Heart left ventricle (tissue), 16 donors: ENCODE measurements at regions of chr5 and their contacts with region 1.

Region 1: DNA sequence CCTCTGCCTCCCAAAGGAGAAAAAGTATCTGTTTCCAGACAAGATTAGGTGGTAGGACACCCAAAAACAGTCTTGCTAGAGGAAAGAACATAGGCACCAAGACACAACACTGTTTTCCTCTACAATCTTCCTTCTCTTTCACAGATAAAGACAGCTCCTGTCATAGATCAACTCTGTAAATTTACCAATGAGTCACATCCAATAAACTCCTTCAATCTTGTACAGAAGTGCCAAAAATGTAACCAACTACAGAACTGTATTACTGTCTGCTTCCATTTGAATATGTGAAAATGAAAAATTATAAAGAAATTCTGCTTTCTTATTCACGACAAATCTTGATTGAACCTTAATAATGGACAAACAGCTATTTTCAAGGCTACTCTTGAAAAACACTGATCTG is 286.9 kb downstream of the PLK2 start:
- DNase-seq: no peak
- ATAC-seq: no peak
- H3K4me3 ChIP-seq: no peak overlapping the region
- H3K27ac ChIP-seq: no peak overlapping the region
- H3K4me1 ChIP-seq: no peaks in the 10 kb centered on the region
- H3K27me3 ChIP-seq: no peaks in the 10 kb centered on the region
- CTCF ChIP-seq: no peak
- POLR2A ChIP-seq: no peak

Region 2: GRCh38 chr5:57405984-57406383 is 767.0 kb before region 1 on chr5:
- intact Hi-C with region 1: no loop called
- DNase-seq: no peak
- ATAC-seq: peak in 3 of 4 donors; percentile 45 to 48 (median 46)
- H3K4me3 ChIP-seq: no peak overlapping the region
- H3K27ac ChIP-seq: peak overlapping the region in 5 of 12 donors; percentile 9 to 72 (median 22)
- H3K4me1 ChIP-seq: peaks cover 0 to 60% (median 30%) of the 10 kb centered on the region in 12 donors
- H3K27me3 ChIP-seq: no peaks in the 10 kb centered on the region
- CTCF ChIP-seq: no peak
- POLR2A ChIP-seq: no peak

Region 3: GRCh38 chr5:57816108-57816507 is 356.8 kb before region 1 on chr5:
- intact Hi-C with region 1: no loop called
- DNase-seq: no peak
- ATAC-seq: peak; percentile 51 to 81 (median 61)
- H3K4me3 ChIP-seq: no peak overlapping the region
- H3K27ac ChIP-seq: no peak overlapping the region
- H3K4me1 ChIP-seq: peaks cover 0 to 29% (median 6%) of the 10 kb centered on the region in 12 donors
- H3K27me3 ChIP-seq: no peaks in the 10 kb centered on the region
- CTCF ChIP-seq: no peak
- POLR2A ChIP-seq: no peak

Region 4: GRCh38 chr5:57895766-57896165 is 277.2 kb before region 1 on chr5:
- intact Hi-C with region 1: loop called in 1 of 10 experiments (anchors 10 kb)
- DNase-seq: no peak
- ATAC-seq: no peak
- H3K4me3 ChIP-seq: no peak overlapping the region
- H3K27ac ChIP-seq: no peak overlapping the region
- H3K4me1 ChIP-seq: peaks cover 0 to 9% (median 0%) of the 10 kb centered on the region in 12 donors
- H3K27me3 ChIP-seq: no peaks in the 10 kb centered on the region
- CTCF ChIP-seq: no peak
- POLR2A ChIP-seq: no peak